ENCODE measurements at regions of chr10 and their contacts with region 1.

Region 1: DNA sequence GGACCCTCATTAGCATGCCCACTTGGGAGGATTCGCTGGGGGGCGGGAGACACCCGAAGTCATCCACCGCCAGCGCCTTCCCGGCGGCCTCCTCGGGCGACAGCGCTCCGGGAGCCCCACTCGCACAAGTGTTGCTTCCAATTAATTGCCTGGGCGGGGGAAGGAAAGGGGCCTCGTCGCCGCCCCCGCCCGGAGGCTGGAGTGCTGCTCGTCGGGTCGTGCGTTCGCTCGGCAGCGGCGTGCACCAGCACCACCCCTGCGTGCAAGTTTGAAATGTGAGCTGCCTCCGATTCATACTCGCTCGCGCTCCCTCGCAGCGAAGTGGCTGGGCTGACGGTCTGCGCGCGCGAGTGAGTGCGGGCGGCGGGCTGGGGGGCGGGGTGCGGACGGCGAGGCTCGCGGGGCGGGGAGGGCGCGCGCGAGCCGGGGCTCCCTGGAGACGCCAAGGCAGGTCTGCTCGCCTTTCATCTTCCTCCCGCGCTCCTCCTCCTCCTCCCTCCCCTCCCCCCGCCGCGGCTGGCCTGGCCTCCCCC is 104.6 kb upstream of the PPIF start:
- DNase-seq: peak; percentile 86
- H3K4me3 ChIP-seq: peak overlapping the region; percentile 53 to 59
- H3K27ac ChIP-seq: peak overlapping the region; percentile 41 to 99; a peak in 3 of 4 replicates
- H3K4me1 ChIP-seq: peaks cover 68 to 85% of the 10 kb centered on the region in 2 experiments
- H3K27me3 ChIP-seq: no peaks in the 10 kb centered on the region
- CTCF ChIP-seq: no peak
- EP300 ChIP-seq: no peak
- RAD21 ChIP-seq: peak; percentile 16; the same call in 1 of the 2 replicates

Region 2: DNA sequence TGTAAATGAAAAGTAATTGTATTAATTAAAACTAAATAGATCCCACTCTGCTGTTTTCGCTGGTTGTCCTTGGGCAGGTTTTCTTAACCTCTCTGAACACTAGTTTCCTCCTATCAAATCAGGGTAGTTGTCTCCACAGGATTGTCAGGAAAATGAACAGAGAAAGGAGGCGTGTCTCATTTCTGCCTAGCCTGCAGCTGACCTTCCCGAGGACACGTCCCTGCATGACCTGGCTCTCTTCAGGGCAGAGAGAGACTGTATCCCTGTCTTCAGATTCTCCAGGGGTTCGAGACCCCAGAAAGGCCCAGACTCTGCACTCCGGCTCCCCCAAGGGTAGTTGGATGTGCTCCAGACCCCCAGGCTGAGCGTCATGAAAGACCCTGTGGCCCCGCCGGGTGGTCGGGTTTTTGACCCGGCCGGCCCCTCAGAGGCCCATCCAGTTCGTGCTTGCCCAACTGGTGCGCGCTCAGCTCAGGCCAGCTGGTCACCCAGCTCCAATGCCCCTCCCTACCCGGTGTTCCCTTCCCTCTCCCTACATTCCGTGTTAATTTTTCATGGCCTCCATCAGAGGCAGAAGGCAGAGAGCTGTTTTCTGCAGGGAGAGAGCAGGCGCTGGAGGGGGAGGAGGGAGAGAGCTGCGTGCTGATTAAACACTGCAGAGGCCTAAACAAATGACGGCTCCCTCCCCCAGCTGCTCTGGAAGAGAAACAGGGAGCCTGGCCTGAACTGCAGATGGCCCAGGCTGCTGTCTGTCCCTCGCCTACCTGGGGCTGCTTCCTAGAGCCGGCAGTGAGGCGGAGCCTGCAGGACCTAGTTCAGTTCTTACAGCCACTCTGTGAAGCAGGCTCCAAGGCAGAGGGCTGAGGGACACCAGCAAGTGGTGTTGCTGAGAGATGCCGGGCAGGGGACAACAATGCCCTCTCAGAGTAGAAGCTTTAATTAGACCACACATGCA is 18.4 kb after region 1 on chr10:
- CTCF ChIA-PET with region 1: interaction called, 8 read pairs
- POLR2A ChIA-PET with region 1: interaction called, 10 read pairs
- DNase-seq: peak; percentile 86
- H3K4me3 ChIP-seq: no peak overlapping the region
- H3K27ac ChIP-seq: peak overlapping the region; percentile 56 to 99; a peak in 3 of 4 replicates
- H3K4me1 ChIP-seq: peaks cover 23 to 100% of the 10 kb centered on the region in 2 experiments
- H3K27me3 ChIP-seq: no peaks in the 10 kb centered on the region
- CTCF ChIP-seq: no peak
- EP300 ChIP-seq: peak in 1 of 2 experiments; percentile 93; a peak in 2 of 4 replicates
- RAD21 ChIP-seq: peak; percentile 54

Measured in SK-N-SH (cell line).